CD14-positive monocyte (primary cell): ENCODE measurements at regions of chr13 and their contacts with region 1.

Region 1: DNA sequence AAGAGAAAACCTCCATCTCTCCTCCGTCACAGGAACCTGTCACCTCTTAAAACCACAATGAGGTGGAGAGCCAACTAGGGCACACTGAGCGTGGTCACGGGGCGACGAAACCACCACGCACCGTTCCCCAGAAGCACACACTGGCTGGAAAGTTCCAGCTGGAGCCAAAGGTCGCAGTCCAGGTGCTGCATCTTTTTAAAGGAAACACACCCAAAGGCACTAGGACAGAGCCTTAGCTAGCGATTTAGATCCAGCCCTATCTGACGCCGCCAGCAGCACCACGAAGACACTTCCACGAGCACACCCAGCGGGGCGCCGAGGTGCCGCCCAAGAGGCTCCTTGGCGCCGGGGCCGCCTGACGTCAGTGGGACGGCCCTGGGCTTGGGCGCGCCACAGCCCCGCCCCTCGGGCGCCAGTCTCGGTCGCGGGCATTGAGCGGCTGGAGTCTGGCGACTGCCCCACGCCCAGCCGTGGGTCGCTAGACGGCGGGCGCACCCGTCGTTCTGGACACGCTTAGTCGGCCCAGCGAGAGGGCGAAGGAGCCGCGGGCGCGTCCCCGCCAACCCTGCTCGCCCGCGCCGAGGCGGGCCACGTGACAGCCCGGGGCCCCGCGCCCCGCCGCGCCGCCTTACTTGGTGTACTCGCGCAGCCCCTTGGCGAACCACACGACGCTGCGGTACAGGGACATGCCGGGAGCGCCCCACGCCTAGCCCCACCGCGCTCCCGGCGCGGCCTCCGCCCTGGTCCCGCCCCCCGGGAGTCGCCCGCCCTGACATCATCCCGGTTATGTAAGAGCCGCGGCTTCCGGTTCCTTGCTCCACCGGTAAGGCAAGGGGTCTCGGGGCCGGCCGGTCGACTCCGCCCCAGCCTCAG is at the start of gene DHRS12:
- DNase-seq: peak; percentile 87 to 91 (median 88)
- H3K4me3 ChIP-seq: peak within 1 kb of the TSS; percentile 73 to 81 (median 79)
- H3K4me3 Mint-ChIP-seq: peak within 1 kb of the TSS; percentile 84 to 88
- H3K27ac ChIP-seq: peak within 1 kb of the TSS; percentile 81 to 95
- H3K27ac Mint-ChIP-seq: peak within 1 kb of the TSS; percentile 96 to 98 (median 97)
- H3K4me1 ChIP-seq: peaks cover 32 to 38% of the 10 kb centered on the region in 2 donors
- H3K4me1 Mint-ChIP-seq: peaks cover 46% of the 10 kb centered on the region
- H3K27me3 ChIP-seq: no peaks in the 10 kb centered on the region
- H3K27me3 Mint-ChIP-seq: peaks cover 2 to 28% (median 10%) of the 10 kb centered on the region in 3 donors
- CTCF ChIP-seq: no peak
- polyA plus RNA-seq, gene DHRS12: 7.6 to 20.2 (median 20.0) TPM

Region 2: GRCh38 chr13:49936085-49936940 is 1867.3 kb before region 1 on chr13 and contains the start of gene SPRYD7:
- intact Hi-C with region 1: loop called in 1 of 2 experiments (anchors 10 kb)
- DNase-seq: peak; percentile 95 to 97 (median 97)
- H3K4me3 ChIP-seq: peak within 1 kb of the TSS; percentile 70 to 86 (median 74)
- H3K4me3 Mint-ChIP-seq: peak within 1 kb of the TSS; percentile 96 to 98
- H3K27ac ChIP-seq: peak within 1 kb of the TSS; percentile 49 to 67
- H3K27ac Mint-ChIP-seq: peak within 1 kb of the TSS; percentile 76 to 95 (median 89)
- H3K4me1 ChIP-seq: peaks cover 12 to 22% of the 10 kb centered on the region in 2 donors
- H3K4me1 Mint-ChIP-seq: peaks cover 28% of the 10 kb centered on the region
- H3K27me3 ChIP-seq: no peaks in the 10 kb centered on the region
- H3K27me3 Mint-ChIP-seq: peaks cover 1 to 3% (median 3%) of the 10 kb centered on the region in 3 donors
- CTCF ChIP-seq: peak; percentile 95
- polyA plus RNA-seq, gene SPRYD7: 1.1 to 2.3 (median 1.2) TPM

Region 3: DNA sequence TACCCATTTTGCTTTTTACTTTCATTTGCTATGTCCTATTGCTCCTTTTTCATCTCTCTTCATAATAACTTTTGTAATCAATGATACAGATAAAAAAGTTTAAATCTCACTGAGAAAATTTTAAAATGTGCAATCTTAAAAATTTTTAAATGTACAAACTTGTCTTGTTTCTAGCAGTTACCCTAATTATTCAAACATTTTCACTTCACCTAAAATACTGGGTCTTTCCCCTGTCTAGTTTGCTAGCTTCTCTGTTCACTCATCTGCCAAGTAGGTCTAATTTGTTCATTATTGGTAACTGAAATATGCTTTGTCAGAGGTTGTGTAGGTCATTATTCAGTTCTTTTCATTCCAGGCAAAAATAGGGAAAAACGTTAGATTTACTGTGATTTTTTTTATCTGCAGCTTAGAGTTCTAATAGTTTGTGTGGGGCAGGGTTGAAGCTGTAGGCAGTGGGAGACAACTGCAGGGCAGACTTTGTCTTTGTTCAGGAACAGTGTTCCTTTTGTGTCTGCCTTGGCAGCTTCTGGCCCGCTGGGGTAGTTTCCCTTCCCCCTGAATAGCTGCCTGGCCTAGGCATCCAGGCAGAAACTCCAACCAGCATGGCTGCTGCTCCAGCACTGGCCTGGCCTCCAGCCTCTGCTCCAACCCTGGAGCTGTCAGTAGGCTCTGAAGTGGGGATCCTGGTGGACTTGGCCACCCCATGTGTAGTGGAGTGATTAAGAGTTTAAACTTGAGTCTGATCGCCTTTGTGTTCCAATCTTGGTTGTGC is 170.9 kb before region 1 on chr13:
- intact Hi-C with region 1: loop called in 1 of 2 experiments (anchors 10 kb)
- DNase-seq: peak in 1 of 3 donors; percentile 9
- H3K4me3 ChIP-seq: no peak overlapping the region
- H3K4me3 Mint-ChIP-seq: no peak overlapping the region
- H3K27ac ChIP-seq: peak overlapping the region; percentile 44 to 75
- H3K27ac Mint-ChIP-seq: peak overlapping the region; percentile 50 to 86 (median 71)
- H3K4me1 ChIP-seq: peaks cover 25 to 54% of the 10 kb centered on the region in 2 donors
- H3K4me1 Mint-ChIP-seq: peaks cover 61% of the 10 kb centered on the region
- H3K27me3 ChIP-seq: no peaks in the 10 kb centered on the region
- H3K27me3 Mint-ChIP-seq: no peaks in the 10 kb centered on the region
- CTCF ChIP-seq: no peak